Tibial artery (tissue), 4 donors: ENCODE measurements at regions of chr15 and their contacts with region 1.

Region 1: DNA sequence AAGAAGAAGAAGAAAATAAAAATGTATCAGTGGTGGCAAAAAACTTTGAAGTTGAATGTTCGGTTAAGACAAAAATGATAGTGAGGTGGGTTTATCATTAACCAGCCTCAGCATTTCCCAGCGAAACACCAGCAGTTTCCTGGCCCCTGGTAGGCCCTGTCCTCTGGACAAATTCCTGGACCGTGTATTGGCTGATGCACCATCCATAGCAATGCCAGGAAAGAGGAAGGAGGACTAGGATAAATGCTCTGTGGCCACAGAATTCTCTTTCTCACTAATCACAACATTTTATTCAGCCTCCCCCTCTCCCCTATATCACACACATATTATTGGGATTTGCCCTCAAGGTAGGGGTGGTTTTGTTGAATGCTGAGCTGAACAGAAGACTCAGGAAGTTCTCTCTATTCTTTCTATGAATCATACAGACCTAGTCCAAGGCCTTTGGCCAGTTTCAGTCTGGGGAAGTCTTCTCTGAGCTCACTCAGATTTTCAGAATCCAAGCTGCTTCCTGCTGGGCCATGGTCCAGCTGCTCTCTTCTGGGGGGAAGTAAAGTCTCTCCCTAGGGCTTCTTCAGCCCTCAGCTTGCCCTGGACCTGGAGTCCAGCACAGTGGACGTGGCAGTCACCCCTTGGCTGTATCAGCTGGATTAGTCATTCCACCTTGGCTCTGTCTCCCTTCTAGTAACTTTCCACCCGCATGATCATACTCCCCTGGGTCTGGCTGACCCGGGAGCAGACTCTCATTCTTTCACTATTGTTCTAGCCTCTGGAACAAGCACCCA is 27.6 kb downstream of the SLC28A1 start:
- DNase-seq: peak; percentile 96 to 99
- H3K4me3 ChIP-seq: no peak overlapping the region
- H3K27ac ChIP-seq: peak overlapping the region; percentile 84 to 87
- H3K4me1 ChIP-seq: peaks cover 21 to 74% (median 61%) of the 10 kb centered on the region in 4 donors
- H3K27me3 ChIP-seq: no peaks in the 10 kb centered on the region
- CTCF ChIP-seq: peak in 1 of 2 experiments; percentile 15

Region 2: DNA sequence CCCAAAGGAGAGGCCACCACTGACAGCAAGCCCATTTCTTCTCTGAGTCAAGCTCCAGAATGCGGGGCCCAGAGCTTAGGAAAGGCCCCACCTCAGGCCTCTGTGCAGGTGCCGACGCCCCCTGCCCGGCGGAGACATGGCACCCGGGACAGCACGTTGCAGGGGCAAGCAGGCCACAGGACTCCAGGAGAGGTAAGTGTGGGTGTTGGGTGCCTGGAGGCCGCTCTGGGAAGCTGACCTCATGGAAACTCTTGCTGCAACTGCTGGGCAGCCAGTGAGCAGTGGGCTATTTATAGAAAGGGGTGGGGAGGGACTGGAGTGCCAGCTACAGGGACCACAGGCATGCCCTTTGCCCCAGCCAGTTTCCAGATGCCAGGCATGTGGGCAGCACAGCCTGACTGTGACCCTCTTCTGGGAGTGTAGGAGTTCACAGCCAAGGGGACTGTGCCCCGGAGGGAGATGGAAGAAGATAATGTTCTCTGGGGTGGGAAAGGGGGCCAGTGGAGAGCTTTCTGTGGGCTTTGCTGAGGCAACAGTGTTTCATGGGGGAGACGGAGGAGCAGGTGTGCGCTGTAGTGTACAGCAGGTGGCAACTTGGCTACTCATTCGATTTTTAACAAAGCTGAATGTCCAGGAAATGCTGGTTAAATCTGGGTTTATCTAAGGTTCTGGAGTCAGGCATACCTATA is 71.2 kb before region 1 on chr15:
- intact Hi-C with region 1: loop called (anchors 5 kb)
- DNase-seq: peak; percentile 79 to 95
- H3K4me3 ChIP-seq: no peak overlapping the region
- H3K27ac ChIP-seq: peak overlapping the region; percentile 86 to 96
- H3K4me1 ChIP-seq: peaks cover 3 to 82% (median 40%) of the 10 kb centered on the region in 4 donors
- H3K27me3 ChIP-seq: no peaks in the 10 kb centered on the region
- CTCF ChIP-seq: peak in 1 of 2 experiments; percentile 12

Region 3: DNA sequence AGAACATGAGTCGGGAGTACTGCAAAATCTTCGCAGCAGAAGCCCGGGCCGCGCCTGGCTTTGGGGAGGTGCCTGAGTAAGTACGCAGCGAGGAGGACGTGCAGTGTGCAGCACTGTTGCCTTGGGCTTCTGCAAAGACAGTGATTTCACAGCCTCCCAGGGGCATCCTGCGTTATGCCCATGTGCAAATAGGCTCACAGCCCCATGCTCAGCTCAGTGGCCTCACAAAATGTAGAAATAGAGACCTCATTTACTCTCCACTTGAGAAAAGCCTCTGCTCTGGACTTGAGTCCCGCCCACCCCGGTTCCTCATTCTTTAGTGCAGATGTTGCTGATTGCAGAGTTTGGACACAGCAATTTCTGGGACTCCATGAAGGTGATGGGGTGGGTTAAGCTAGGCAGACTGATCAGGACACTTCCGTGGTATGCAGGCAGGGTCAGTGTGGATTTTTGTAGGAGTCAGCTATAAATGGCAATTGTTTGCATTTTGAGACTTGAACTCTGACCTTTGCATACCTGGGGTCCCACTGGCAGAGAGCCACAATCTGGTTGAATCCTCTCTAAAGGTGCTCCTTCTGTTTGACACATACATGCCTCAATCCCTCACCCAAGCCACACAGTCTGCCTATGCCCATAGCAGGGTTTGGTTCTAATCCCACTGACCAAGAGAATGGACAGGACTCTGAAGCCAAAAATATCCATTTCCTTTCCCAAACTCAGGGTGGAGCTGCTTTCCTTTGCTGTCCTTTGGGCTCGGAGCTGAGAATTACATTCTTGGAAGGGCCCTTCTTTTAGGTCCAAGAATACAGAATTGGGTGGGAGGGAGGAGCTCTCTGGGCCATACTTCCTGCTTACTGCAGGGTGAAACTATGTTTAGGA is 48.3 kb before region 1 on chr15:
- intact Hi-C with region 1: no loop called
- DNase-seq: no peak
- H3K4me3 ChIP-seq: no peak overlapping the region
- H3K27ac ChIP-seq: peak overlapping the region; percentile 51 to 66
- H3K4me1 ChIP-seq: peaks cover 0 to 28% (median 24%) of the 10 kb centered on the region in 4 donors
- H3K27me3 ChIP-seq: no peaks in the 10 kb centered on the region
- CTCF ChIP-seq: peak; percentile 48 to 51

Region 4: DNA sequence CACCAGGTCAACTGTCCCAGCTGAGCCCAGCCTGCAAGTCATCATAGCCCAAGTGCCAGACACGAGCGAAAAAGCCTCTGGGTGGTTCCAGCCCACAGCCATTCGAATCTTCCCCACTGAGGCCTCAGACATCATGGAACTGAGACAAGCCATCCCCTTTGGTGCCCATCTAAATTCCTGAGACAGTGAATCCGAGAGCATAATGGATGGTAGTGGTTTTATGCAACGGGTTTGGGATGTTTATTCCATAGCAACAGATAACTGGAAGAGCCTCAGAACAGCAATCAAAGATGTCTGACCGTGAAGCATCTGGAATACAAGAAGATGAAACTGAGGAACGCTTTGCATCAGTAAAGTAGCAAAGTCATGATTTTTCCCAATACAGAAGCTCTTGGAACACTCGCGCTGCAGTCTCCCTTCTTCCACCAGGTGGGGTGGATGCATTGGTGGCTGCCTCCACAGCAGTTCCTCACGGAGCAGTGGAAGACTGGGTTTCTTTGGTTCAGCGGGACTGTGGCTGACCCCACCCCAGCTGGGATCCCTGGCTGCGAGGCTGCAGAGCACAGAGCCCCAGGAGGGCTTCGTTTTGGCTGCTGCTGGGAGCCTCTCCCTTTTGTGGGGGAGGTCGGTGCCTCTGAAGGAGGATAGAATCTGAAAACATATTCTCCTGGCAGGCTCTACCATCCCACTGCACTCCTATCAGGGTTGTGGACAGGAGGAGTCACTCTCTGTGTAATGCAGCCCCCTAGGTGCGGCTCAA is 43.2 kb after region 1 on chr15:
- intact Hi-C with region 1: no loop called
- DNase-seq: peak; percentile 77 to 87
- H3K4me3 ChIP-seq: peak overlapping the region; percentile 26 to 30
- H3K27ac ChIP-seq: no peak overlapping the region
- H3K4me1 ChIP-seq: peaks cover 0 to 16% (median 10%) of the 10 kb centered on the region in 4 donors
- H3K27me3 ChIP-seq: no peaks in the 10 kb centered on the region
- CTCF ChIP-seq: peak; percentile 86 to 87